Panc1 (cell line): ENCODE measurements at regions of chr11 and their contacts with region 1.

Region 1: GRCh38 chr11:34114471-34114870 is 9.0 kb downstream of the NAT10 start:
- DNase-seq: no peak
- ATAC-seq: no peak
- H3K4me3 ChIP-seq: no peak overlapping the region
- H3K27ac ChIP-seq: no peak overlapping the region
- H3K4me1 ChIP-seq: no peaks in the 10 kb centered on the region
- H3K27me3 ChIP-seq: no peaks in the 10 kb centered on the region
- CTCF ChIP-seq: no peak

Region 2: DNA sequence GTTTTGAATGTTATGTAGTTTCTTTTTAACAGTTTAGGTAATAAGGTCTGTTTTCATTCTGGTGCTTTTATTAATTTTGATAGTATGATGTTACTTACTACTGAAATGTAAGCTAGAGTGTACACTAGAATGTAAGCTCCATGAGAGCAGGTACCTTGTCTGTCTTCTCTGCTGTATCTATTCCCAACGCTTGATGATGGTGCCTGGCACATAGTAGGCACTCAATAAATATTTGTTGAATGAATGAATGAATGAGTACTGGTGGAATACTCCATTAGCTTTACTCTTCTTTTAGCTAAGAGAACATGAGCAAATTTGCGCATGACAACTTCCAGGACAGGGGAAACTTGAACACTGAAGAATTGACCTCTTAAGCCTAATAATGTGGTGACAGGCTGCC is 15.7 kb before region 1 on chr11:
- CTCF ChIA-PET with region 1: no interaction called
- POLR2A ChIA-PET with region 1: no interaction called
- in situ Hi-C with region 1: no loop called
- intact Hi-C with region 1: no loop called
- DNase-seq: no peak
- ATAC-seq: no peak
- H3K4me3 ChIP-seq: no peak overlapping the region
- H3K27ac ChIP-seq: no peak overlapping the region
- H3K4me1 ChIP-seq: 0 out of 2 replicates have a peak, but pooled peaks cover 6% of the 10 kb centered on the region
- H3K27me3 ChIP-seq: no peaks in the 10 kb centered on the region
- CTCF ChIP-seq: no peak

Region 3: GRCh38 chr11:34278693-34279297 is 164.3 kb after region 1 on chr11:
- CTCF ChIA-PET with region 1: no interaction called
- POLR2A ChIA-PET with region 1: interaction called, 10 read pairs
- in situ Hi-C with region 1: no loop called
- intact Hi-C with region 1: no loop called
- DNase-seq: no peak
- ATAC-seq: no peak
- H3K4me3 ChIP-seq: no peak overlapping the region
- H3K27ac ChIP-seq: no peak overlapping the region
- H3K4me1 ChIP-seq: peaks cover 17% of the 10 kb centered on the region
- H3K27me3 ChIP-seq: no peaks in the 10 kb centered on the region
- CTCF ChIP-seq: no peak